HCT116 (cell line): ENCODE measurements at regions of chr5 and their contacts with region 1.

Region 1: DNA sequence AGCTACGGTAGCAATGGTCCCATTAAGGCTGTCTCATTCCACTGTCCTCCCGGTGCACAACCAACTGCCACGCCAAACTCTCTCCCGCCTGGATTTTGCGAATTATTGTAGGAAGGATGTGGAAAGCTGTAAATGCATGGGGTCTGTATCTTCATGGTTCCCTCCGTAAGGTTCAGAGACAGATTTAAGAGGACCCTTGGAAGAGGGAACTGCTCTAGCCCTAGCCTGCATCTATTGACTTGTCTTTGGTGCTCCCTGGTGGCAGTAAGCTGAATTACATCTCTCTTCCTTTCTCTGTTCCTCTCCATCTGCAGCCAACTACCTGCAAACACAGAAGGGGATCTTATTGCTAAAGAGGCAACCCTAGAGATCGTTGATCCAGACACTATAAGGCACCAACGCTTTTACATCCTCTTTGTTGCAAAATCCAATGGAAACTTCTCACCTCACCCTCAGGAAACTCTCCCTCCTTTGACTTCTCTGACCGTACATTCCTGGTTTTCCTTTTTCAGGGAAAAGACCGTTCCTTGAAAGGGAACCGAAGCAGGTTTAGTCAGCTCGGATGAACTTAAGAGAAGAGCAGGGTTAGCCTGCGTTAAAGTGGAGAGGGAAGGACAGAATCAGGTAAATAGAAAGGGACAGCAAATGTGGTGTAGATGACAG is 11.9 kb downstream of the CAPSL start:
- DNase-seq: peak; percentile 28
- ATAC-seq: peak; percentile 80
- H3K4me3 ChIP-seq: no peak overlapping the region
- H3K27ac ChIP-seq: no peak overlapping the region
- H3K4me1 ChIP-seq: no peaks in the 10 kb centered on the region
- H3K27me3 ChIP-seq: peaks cover 46% of the 10 kb centered on the region
- CTCF ChIP-seq: peak; percentile 49 to 85 (median 71); a peak in 5 of 6 replicates
- POLR2A ChIP-seq: no peak
- RAD21 ChIP-seq: peak; percentile 78

Region 2: DNA sequence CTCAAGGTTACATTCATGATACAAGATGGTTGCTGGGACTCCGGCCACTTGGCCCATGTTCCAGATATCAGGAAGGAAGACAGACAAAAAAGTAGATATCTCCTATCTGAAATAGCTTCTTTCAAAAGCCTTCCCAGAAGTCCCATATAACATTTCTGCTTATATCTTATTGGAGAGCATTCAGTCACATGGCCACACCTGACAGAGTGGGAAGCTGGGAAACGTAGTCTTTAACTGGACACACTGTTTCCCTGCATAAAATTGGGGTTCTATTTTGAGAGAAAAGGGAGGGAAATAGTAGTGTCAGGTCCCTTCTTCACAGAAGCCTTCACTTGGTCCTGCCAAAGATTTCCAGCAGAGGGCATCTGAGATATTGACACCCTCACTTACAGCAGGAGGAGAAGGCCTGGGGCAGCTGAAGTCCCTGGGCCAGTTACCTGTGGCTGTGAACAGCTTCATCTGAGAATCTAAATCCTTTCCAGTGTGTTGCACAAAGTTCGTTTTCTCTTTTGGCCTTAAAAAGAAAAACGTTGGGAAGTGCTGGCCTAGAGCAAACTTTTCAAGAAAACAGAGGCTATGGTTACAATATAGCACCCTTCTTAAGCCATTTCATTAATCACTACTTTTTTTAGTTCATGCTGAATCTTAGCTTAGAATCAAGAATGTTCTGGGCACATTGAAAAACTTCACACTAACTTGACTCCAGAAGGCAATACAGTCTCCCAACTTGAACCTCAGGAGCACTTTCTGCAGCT is 275.3 kb before region 1 on chr5:
- CTCF ChIA-PET with region 1: interaction called, 33 read pairs
- POLR2A ChIA-PET with region 1: no interaction called
- RAD21 ChIA-PET with region 1: interaction called in 1 of 2 experiments, 3 read pairs
- intact Hi-C with region 1: loop called (anchors 1 kb)
- DNase-seq: peak; percentile 24
- ATAC-seq: peak; percentile 90
- H3K4me3 ChIP-seq: no peak overlapping the region
- H3K27ac ChIP-seq: no peak overlapping the region
- H3K4me1 ChIP-seq: no peaks in the 10 kb centered on the region
- H3K27me3 ChIP-seq: no peaks in the 10 kb centered on the region
- CTCF ChIP-seq: peak; percentile 27 to 58 (median 56); a peak in 5 of 6 replicates
- POLR2A ChIP-seq: no peak
- RAD21 ChIP-seq: peak; percentile 38; the same call in 1 of the 2 replicates

Region 3: GRCh38 chr5:35777358-35778087 is 149.0 kb before region 1 on chr5:
- CTCF ChIA-PET with region 1: interaction called, 5 read pairs
- POLR2A ChIA-PET with region 1: no interaction called
- RAD21 ChIA-PET with region 1: interaction called in 1 of 2 experiments, 3 read pairs
- intact Hi-C with region 1: loop called (anchors 1 kb)
- DNase-seq: peak; percentile 73
- ATAC-seq: peak; percentile 81
- H3K4me3 ChIP-seq: no peak overlapping the region
- H3K27ac ChIP-seq: no peak overlapping the region
- H3K4me1 ChIP-seq: no peaks in the 10 kb centered on the region
- H3K27me3 ChIP-seq: peaks cover 18% of the 10 kb centered on the region
- CTCF ChIP-seq: peak; percentile 44 to 58 (median 57); a peak in 5 of 6 replicates
- POLR2A ChIP-seq: no peak
- RAD21 ChIP-seq: peak; percentile 48; the same call in 1 of the 2 replicates